ENCODE measurements at regions of chr5 and their contacts with region 1.

Region 1: GRCh38 chr5:173954671-173955521 is 34.1 kb upstream of the C5orf47 start:
- DNase-seq: peak in 2 of 5 donors; percentile 28 to 52
- ATAC-seq: peak; percentile 76 to 91 (median 88)
- H3K4me3 ChIP-seq: no peak overlapping the region
- H3K27ac ChIP-seq: peak overlapping the region; percentile 36 to 91 (median 78)
- H3K4me1 ChIP-seq: peaks cover 0 to 64% (median 21%) of the 10 kb centered on the region in 12 donors
- H3K27me3 ChIP-seq: no peaks in the 10 kb centered on the region
- CTCF ChIP-seq: no peak
- POLR2A ChIP-seq: peak in 1 of 2 donors; percentile 26

Region 2: DNA sequence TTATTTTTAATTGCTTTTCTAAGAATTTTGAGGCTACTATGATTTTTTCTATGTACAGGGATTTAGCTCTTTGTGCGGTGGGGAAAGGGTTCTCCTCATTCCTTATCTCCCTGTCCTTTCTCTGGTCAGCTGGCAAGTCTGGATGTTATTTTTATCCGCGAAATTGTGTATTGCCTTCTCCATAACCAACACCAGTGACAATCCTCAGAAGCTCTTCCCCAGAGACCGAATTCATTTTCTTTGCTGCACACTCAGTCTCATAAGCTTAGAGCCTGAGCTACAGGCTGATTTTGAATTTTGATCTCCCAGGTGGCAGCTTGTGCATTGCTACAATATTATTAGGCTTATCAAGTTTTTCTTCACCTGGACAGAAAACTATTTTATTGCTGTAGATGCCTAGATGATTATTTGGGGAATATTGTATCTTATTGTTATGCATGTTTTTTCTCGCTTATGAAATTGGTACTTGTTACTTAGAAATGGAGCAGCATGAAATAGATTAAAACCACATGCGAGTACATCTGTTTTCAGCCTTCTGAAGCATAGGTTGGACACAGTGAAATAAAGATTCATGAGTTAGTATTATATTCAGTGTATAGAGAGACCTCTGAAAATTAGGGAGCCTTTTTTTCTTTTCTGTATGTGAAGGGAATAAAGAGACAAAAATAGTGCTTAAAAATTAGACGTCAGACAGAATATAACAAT is 39.4 kb before region 1 on chr5:
- intact Hi-C with region 1: no loop called
- DNase-seq: peak in 1 of 5 donors; percentile 40
- ATAC-seq: peak; percentile 46 to 66 (median 54)
- H3K4me3 ChIP-seq: peak overlapping the region in 8 of 12 donors; percentile 3 to 30 (median 14)
- H3K27ac ChIP-seq: peak overlapping the region in 11 of 12 donors; percentile 57 to 89 (median 85)
- H3K4me1 ChIP-seq: peaks cover 0 to 85% (median 58%) of the 10 kb centered on the region in 12 donors
- H3K27me3 ChIP-seq: no peaks in the 10 kb centered on the region
- CTCF ChIP-seq: no peak
- POLR2A ChIP-seq: no peak

Region 3: GRCh38 chr5:173925448-173926071 is 29.3 kb before region 1 on chr5:
- intact Hi-C with region 1: loop called in 1 of 10 experiments (anchors 2 kb)
- DNase-seq: peak in 4 of 5 donors; percentile 42 to 62 (median 52)
- ATAC-seq: peak in 1 of 4 donors; percentile 14
- H3K4me3 ChIP-seq: peak overlapping the region in 2 of 12 donors; percentile 3 to 10
- H3K27ac ChIP-seq: peak overlapping the region; percentile 58 to 89 (median 86)
- H3K4me1 ChIP-seq: peaks cover 15 to 97% (median 67%) of the 10 kb centered on the region in 12 donors
- H3K27me3 ChIP-seq: no peaks in the 10 kb centered on the region
- CTCF ChIP-seq: peak; percentile 21 to 70 (median 46)
- POLR2A ChIP-seq: no peak

Measured in heart left ventricle (tissue), 16 donors.